CD8-positive, alpha-beta T cell (primary cell): ENCODE measurements at regions of chr13 and their contacts with region 1.

Region 1: DNA sequence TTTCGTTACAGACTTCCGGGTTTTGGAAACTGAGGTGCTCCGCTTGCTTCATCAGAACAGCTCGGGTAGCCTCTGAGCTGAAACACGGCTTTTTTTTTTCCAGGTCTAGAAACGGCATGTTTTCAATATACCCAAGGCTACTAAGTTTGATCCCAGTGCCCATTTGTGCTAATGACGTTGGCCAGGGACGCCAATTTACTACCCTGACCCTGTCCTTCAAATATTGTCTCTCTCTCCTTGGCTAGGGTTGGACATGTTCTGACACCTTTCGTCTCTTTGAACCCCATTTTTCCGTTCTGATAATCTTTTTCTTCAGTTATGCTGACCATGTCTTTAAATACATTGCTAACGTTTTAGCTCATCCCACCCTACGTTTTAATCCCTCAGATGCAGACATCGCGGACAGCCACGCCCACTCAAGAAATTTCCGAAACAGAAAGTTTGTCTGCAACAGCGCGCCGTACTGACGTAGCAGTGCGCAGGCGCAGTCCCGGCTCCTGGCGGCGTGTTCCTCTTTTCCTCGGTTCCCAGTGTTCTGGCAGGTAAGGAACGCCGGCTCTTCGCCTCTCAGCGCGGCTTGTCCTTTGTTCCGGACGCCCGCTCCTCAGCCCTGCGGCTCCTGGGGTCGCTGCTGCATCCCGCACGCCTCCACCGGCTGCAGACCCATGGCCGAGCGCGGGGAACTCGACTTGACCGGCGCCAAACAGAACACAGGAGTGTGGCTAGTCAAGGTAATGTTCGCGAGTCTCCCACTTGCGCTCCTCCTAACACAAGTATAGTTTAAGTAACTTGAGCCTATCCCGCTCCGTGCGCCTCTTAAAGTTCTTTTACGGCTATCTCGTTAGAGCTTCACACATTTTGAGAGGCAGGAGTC is at the start of gene GTF2F2:
- DNase-seq: peak; percentile 73 to 94 (median 88)
- ATAC-seq: peak; percentile 65
- H3K4me3 ChIP-seq: peak within 1 kb of the TSS; percentile 70 to 93
- H3K4me3 Mint-ChIP-seq: no peak within 1 kb of the TSS
- H3K27ac ChIP-seq: peak within 1 kb of the TSS; percentile 93 to 97
- H3K27ac Mint-ChIP-seq: no peak within 1 kb of the TSS
- H3K4me1 ChIP-seq: peaks cover 22% of the 10 kb centered on the region
- H3K4me1 Mint-ChIP-seq: peaks cover 20% of the 10 kb centered on the region
- H3K27me3 ChIP-seq: no peaks in the 10 kb centered on the region
- H3K27me3 Mint-ChIP-seq: no peaks in the 10 kb centered on the region
- CTCF ChIP-seq: no peak
- total RNA-seq, gene GTF2F2: 13.2 to 14.8 TPM

Region 2: DNA sequence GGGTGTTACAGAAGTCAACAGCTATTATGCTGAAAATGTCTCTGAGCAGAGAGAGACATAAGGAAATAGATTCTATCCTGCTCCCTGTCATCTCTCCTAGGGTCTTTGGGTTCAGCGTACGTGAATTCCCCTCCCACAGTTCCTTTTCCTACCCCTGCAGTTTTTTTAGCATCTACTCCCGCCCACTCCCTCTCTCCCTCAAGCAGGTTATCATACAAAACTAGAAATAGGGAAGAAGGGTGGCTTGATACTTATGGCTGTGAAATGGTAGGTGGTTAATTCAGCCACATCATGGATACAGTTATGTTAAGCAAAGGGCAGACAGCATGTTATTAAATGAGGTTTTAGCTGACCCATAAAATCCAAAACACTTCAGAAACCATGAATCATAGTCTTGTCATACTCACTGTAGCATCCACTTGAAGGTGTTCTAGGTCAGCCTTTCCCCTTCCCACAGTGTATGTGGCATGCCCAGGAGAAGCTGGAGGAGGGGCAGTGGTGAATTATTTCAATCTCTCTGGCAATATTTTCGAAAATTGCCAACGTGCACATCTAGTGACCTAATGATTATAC is 983.4 kb before region 1 on chr13:
- CTCF ChIA-PET with region 1: no interaction called
- POLR2A ChIA-PET with region 1: interaction called, 3 read pairs
- intact Hi-C with region 1: loop called in 1 of 2 experiments (anchors 5 kb)
- DNase-seq: no peak
- ATAC-seq: no peak
- H3K4me3 ChIP-seq: no peak overlapping the region
- H3K4me3 Mint-ChIP-seq: no peak overlapping the region
- H3K27ac ChIP-seq: no peak overlapping the region
- H3K27ac Mint-ChIP-seq: no peak overlapping the region
- H3K4me1 ChIP-seq: peaks cover 7% of the 10 kb centered on the region
- H3K4me1 Mint-ChIP-seq: peaks cover 9% of the 10 kb centered on the region
- H3K27me3 ChIP-seq: no peaks in the 10 kb centered on the region
- H3K27me3 Mint-ChIP-seq: peaks cover 6% of the 10 kb centered on the region
- CTCF ChIP-seq: no peak

Region 3: DNA sequence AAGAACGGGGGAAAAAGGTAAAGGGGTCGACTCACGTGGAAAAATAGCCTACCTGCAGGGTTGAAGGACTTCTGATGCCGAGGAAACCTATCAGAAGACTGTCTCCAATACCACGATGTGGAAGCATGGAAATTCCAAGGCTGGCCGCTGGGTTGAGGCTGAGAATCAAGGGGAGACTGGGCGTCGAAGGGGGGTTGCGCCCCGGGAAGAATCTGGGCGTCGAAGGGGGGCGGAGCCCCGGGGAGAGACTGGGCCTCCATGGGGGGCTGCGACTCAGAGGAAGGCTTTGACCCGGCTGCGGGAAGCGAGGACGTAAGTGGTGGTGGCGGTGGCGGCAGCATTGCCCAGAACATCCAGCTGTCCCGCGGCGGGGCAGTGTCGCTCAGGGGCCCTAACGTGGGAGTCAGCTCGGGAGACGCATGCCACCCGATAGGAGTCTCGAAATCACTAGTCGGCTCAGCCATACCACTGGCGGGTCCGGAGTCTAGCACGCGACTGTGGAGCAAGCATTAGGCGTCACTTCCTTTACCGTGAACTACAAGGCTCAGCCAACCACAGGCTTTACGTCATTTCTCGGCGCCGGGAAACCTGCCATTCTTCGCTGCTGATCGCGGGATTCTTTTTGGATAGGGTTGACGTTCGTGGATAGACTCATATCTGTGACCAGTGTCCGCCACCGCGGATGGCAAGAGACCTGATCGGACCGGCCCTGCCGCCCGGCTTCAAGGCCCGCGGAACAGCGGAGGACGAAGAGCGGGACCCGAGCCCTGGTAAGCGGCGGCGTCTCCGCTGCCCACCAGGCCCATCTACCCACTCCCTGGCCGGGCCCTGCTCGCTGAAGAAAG is 131.0 kb before region 1 on chr13 and contains the starts of genes GPALPP1 and NUFIP1:
- CTCF ChIA-PET with region 1: no interaction called
- POLR2A ChIA-PET with region 1: no interaction called
- intact Hi-C with region 1: loop called (anchors 5 kb)
- DNase-seq: peak; percentile 79 to 96 (median 93)
- ATAC-seq: peak; percentile 94
- H3K4me3 ChIP-seq: peak within 1 kb of the TSS; percentile 88 to 92
- H3K4me3 Mint-ChIP-seq: peak within 1 kb of the TSS; percentile 100
- H3K27ac ChIP-seq: peak within 1 kb of the TSS; percentile 86 to 90
- H3K27ac Mint-ChIP-seq: peak within 1 kb of the TSS; percentile 99
- H3K4me1 ChIP-seq: peaks cover 20% of the 10 kb centered on the region
- H3K4me1 Mint-ChIP-seq: peaks cover 64% of the 10 kb centered on the region
- H3K27me3 ChIP-seq: no peaks in the 10 kb centered on the region
- H3K27me3 Mint-ChIP-seq: no peaks in the 10 kb centered on the region
- CTCF ChIP-seq: no peak
- total RNA-seq, gene GPALPP1: 16.7 to 17.8 TPM
- total RNA-seq, gene NUFIP1: 5.2 to 6.1 TPM

Region 4: GRCh38 chr13:45133396-45134118 is 13.3 kb after region 1 on chr13:
- CTCF ChIA-PET with region 1: no interaction called
- POLR2A ChIA-PET with region 1: no interaction called
- intact Hi-C with region 1: no loop called
- DNase-seq: no peak
- ATAC-seq: no peak
- H3K4me3 ChIP-seq: no peak overlapping the region
- H3K4me3 Mint-ChIP-seq: no peak overlapping the region
- H3K27ac ChIP-seq: no peak overlapping the region
- H3K27ac Mint-ChIP-seq: no peak overlapping the region
- H3K4me1 ChIP-seq: no peaks in the 10 kb centered on the region
- H3K4me1 Mint-ChIP-seq: peaks cover 44% of the 10 kb centered on the region
- H3K27me3 ChIP-seq: no peaks in the 10 kb centered on the region
- H3K27me3 Mint-ChIP-seq: no peaks in the 10 kb centered on the region
- CTCF ChIP-seq: no peak

Region 5: GRCh38 chr13:45297456-45298205 is 177.4 kb after region 1 on chr13:
- CTCF ChIA-PET with region 1: no interaction called
- POLR2A ChIA-PET with region 1: no interaction called
- intact Hi-C with region 1: loop called in 1 of 2 experiments (anchors 10 kb)
- DNase-seq: peak in 3 of 9 experiments; percentile 13 to 60 (median 32)
- ATAC-seq: peak; percentile 81
- H3K4me3 ChIP-seq: no peak overlapping the region
- H3K4me3 Mint-ChIP-seq: peak overlapping the region; percentile 9
- H3K27ac ChIP-seq: peak overlapping the region in 1 of 2 experiments; percentile 55
- H3K27ac Mint-ChIP-seq: peak overlapping the region; percentile 81
- H3K4me1 ChIP-seq: peaks cover 29% of the 10 kb centered on the region
- H3K4me1 Mint-ChIP-seq: peaks cover 41% of the 10 kb centered on the region
- H3K27me3 ChIP-seq: no peaks in the 10 kb centered on the region
- H3K27me3 Mint-ChIP-seq: no peaks in the 10 kb centered on the region
- CTCF ChIP-seq: no peak

Region 6: GRCh38 chr13:45340926-45341750 is 220.9 kb after region 1 on chr13 and contains the start of gene TPT1:
- CTCF ChIA-PET with region 1: no interaction called
- POLR2A ChIA-PET with region 1: interaction called, 3 read pairs
- intact Hi-C with region 1: loop called (anchors 1 to 10 kb)
- DNase-seq: peak; percentile 99 to 100 (median 100)
- ATAC-seq: peak; percentile 86
- H3K4me3 ChIP-seq: peak within 1 kb of the TSS; percentile 83 to 89
- H3K4me3 Mint-ChIP-seq: peak within 1 kb of the TSS; percentile 99
- H3K27ac ChIP-seq: peak within 1 kb of the TSS; percentile 96 to 99
- H3K27ac Mint-ChIP-seq: peak within 1 kb of the TSS; percentile 99
- H3K4me1 ChIP-seq: peaks cover 42% of the 10 kb centered on the region
- H3K4me1 Mint-ChIP-seq: peaks cover 63% of the 10 kb centered on the region
- H3K27me3 ChIP-seq: no peaks in the 10 kb centered on the region
- H3K27me3 Mint-ChIP-seq: no peaks in the 10 kb centered on the region
- CTCF ChIP-seq: no peak
- total RNA-seq, gene TPT1: 8,260 to 8,503 TPM

Region 7: DNA sequence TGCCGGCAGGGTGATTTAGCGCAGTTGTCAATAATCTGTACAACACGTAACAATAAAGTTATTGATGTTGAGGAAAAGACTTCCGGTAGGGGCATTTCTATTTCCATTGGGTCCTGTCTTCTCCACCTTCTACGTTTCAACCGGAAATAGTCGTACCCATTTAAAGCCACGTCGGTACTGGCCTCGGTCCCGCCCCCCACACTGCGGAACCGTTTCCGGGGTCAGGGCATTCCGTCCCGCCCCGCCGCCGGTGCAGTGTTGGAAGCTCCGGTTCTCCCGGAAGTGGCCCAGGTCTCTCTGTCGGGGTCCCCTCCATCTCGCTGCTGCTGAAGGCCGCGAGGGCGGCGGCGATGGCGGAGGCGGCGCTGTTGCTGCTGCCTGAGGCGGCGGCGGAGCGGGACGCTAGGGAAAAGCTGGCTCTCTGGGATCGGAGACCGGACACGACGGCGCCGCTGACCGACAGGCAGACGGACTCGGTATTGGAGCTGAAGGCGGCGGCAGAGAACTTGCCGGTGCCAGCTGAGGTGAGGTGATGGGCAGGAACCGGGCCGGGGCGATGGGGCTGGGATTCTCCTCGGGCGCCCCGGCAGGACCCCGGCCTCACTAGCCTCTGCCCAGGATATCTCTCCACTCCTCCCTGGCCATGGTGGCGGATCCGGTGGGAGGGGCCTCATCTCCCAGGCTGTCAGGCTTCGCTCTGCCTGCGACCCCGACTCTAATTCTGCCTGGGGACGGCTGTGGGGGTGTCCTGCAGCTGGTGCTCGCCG is 344.6 kb after region 1 on chr13 and contains the start of gene COG3:
- CTCF ChIA-PET with region 1: no interaction called
- POLR2A ChIA-PET with region 1: no interaction called
- intact Hi-C with region 1: loop called (anchors 2 kb)
- DNase-seq: peak; percentile 86 to 98 (median 94)
- ATAC-seq: peak; percentile 94
- H3K4me3 ChIP-seq: peak within 1 kb of the TSS; percentile 77 to 85
- H3K4me3 Mint-ChIP-seq: peak within 1 kb of the TSS; percentile 92
- H3K27ac ChIP-seq: peak within 1 kb of the TSS; percentile 82 to 95
- H3K27ac Mint-ChIP-seq: peak within 1 kb of the TSS; percentile 91
- H3K4me1 ChIP-seq: peaks cover 38% of the 10 kb centered on the region
- H3K4me1 Mint-ChIP-seq: peaks cover 49% of the 10 kb centered on the region
- H3K27me3 ChIP-seq: no peaks in the 10 kb centered on the region
- H3K27me3 Mint-ChIP-seq: no peaks in the 10 kb centered on the region
- CTCF ChIP-seq: peak; percentile 6
- total RNA-seq, gene COG3: 45.9 to 47.6 TPM

Region 8: GRCh38 chr13:46134961-46135522 is 1014.8 kb after region 1 on chr13:
- CTCF ChIA-PET with region 1: no interaction called
- POLR2A ChIA-PET with region 1: no interaction called
- intact Hi-C with region 1: loop called in 1 of 2 experiments (anchors 5 kb)
- DNase-seq: no peak
- ATAC-seq: no peak
- H3K4me3 ChIP-seq: no peak overlapping the region
- H3K4me3 Mint-ChIP-seq: no peak overlapping the region
- H3K27ac ChIP-seq: peak overlapping the region in 1 of 2 experiments; percentile 24
- H3K27ac Mint-ChIP-seq: peak overlapping the region; percentile 84
- H3K4me1 ChIP-seq: no peaks in the 10 kb centered on the region
- H3K4me1 Mint-ChIP-seq: peaks cover 30% of the 10 kb centered on the region
- H3K27me3 ChIP-seq: no peaks in the 10 kb centered on the region
- H3K27me3 Mint-ChIP-seq: no peaks in the 10 kb centered on the region
- CTCF ChIP-seq: no peak